ENCODE measurements at regions of chr2 and their contacts with region 1.

Region 1: DNA sequence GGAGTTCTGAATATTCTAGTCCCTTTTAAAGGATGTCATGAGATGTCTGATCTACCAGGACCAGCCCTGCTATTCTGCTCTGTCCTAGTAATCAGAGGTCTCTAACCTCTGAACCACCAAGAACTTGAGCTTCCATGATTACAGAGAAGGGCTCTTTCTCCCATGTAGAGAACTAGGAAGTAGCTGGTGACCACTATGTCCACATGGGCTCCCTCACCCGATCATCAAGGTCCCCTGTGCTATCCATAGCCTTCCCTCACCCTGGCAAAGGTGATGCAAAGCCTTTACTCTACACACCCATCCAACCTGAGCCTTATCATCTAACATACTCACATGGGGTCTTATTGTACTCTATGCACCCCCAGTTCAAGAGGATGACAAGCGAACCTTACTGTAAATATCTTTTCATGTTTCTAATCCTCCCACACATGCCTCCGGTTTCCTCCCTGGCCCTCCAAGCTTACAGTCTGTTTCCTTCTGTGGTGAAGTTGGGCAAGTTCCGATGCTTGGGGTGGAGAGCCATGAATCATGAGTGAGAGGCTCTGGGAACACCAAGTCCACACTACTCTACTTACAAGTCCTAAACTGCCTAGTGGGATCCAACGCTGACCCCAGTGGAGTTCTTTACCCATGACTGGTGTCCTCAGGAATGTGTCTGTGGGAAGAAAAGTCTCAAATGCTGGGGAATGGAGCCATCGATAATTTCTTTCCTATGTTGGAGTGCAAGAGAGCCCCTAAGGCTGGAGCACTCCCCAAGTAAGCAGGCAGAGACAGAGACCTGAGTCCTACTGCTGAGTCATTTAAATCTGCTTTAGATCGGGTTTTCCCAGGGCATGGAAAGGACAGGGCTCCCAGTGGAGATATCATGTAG is 73.3 kb upstream of the KLF7 start:
- DNase-seq: peak; percentile 20
- H3K4me3 Mint-ChIP-seq: no peak overlapping the region
- H3K27ac Mint-ChIP-seq: peak overlapping the region; percentile 3
- H3K4me1 Mint-ChIP-seq: peaks cover 13% of the 10 kb centered on the region
- H3K27me3 Mint-ChIP-seq: no peaks in the 10 kb centered on the region

Region 2: GRCh38 chr2:207223051-207223450 is 16.0 kb before region 1 on chr2:
- CTCF ChIA-PET with region 1: interaction called, 16 read pairs
- POLR2A ChIA-PET with region 1: no interaction called
- DNase-seq: no peak
- H3K4me3 Mint-ChIP-seq: no peak overlapping the region
- H3K27ac Mint-ChIP-seq: no peak overlapping the region
- H3K4me1 Mint-ChIP-seq: peaks cover 34% of the 10 kb centered on the region
- H3K27me3 Mint-ChIP-seq: peaks cover 2% of the 10 kb centered on the region

Region 3: GRCh38 chr2:207274530-207275189 is 35.6 kb after region 1 on chr2:
- CTCF ChIA-PET with region 1: no interaction called
- POLR2A ChIA-PET with region 1: no interaction called
- DNase-seq: no peak
- H3K4me3 Mint-ChIP-seq: no peak overlapping the region
- H3K27ac Mint-ChIP-seq: no peak overlapping the region
- H3K4me1 Mint-ChIP-seq: no peaks in the 10 kb centered on the region
- H3K27me3 Mint-ChIP-seq: no peaks in the 10 kb centered on the region

Region 4: DNA sequence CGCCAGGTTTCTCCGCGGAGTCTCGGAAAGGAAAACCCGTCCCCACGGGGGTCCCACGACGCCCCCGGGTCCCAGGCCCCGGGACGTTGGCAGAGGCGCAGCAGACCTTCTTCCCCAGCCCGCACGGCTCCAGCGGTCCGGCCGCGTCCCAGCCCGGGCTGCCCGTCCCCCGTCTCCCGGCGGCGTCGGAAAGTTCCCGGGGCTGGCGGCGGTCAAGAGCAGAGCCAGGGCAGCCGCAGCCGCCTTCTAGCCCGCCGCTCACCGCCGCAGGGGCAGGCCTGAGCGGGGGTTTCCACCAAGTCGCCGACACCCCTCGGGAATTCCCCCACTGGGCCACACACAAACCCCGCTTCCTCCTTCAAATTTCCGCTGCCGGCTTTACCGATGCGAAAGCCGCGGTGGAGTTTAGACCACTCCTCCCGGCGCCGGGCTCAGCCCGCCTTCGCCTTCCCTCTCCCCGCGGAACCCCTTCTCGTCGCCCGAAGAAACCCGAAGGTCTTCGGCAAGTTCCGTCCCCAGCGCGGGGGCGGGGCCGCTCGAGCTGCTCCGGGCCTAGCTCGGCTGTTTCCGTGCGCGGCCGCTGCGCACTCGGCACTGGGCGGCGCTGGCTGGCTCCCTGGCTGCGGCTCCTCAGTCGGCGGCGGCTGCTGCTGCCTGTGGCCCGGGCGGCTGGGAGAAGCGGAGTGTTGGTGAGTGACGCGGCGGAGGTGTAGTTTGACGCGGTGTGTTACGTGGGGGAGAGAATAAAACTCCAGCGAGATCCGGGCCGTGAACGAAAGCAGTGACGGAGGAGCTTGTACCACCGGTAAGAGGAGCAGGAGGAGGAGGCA is 290.5 kb after region 1 on chr2 and contains the start of gene CREB1:
- CTCF ChIA-PET with region 1: no interaction called
- POLR2A ChIA-PET with region 1: no interaction called
- DNase-seq: peak; percentile 99
- H3K4me3 Mint-ChIP-seq: peak within 1 kb of the TSS; percentile 96
- H3K27ac Mint-ChIP-seq: peak within 1 kb of the TSS; percentile 100
- H3K4me1 Mint-ChIP-seq: peaks cover 61% of the 10 kb centered on the region
- H3K27me3 Mint-ChIP-seq: peaks cover 3% of the 10 kb centered on the region
- total RNA-seq, gene CREB1: 92.5 to 118 TPM

Measured in activated CD4-positive, alpha-beta T cell treated with anti-CD3 and anti-CD28 coated beads, Interleukin-2, amount 10 ng/mL, durations not matched to agents 7 days and 5 days (primary cell).